ENCODE measurements at regions of chr2 and their contacts with region 1.

Region 1: GRCh38 chr2:233251306-233252116 is at the start of gene ATG16L1:
- DNase-seq: peak; percentile 89 to 98 (median 95)
- ATAC-seq: peak; percentile 94
- H3K4me3 ChIP-seq: peak within 1 kb of the TSS; percentile 85 to 92
- H3K4me3 Mint-ChIP-seq: peak within 1 kb of the TSS; percentile 90
- H3K27ac ChIP-seq: peak within 1 kb of the TSS; percentile 82 to 97
- H3K27ac Mint-ChIP-seq: peak within 1 kb of the TSS; percentile 96
- H3K4me1 ChIP-seq: peaks cover 59% of the 10 kb centered on the region
- H3K4me1 Mint-ChIP-seq: peaks cover 71% of the 10 kb centered on the region
- H3K27me3 ChIP-seq: no peaks in the 10 kb centered on the region
- H3K27me3 Mint-ChIP-seq: no peaks in the 10 kb centered on the region
- CTCF ChIP-seq: peak; percentile 93
- total RNA-seq, gene ATG16L1: 156 to 164 TPM

Region 2: DNA sequence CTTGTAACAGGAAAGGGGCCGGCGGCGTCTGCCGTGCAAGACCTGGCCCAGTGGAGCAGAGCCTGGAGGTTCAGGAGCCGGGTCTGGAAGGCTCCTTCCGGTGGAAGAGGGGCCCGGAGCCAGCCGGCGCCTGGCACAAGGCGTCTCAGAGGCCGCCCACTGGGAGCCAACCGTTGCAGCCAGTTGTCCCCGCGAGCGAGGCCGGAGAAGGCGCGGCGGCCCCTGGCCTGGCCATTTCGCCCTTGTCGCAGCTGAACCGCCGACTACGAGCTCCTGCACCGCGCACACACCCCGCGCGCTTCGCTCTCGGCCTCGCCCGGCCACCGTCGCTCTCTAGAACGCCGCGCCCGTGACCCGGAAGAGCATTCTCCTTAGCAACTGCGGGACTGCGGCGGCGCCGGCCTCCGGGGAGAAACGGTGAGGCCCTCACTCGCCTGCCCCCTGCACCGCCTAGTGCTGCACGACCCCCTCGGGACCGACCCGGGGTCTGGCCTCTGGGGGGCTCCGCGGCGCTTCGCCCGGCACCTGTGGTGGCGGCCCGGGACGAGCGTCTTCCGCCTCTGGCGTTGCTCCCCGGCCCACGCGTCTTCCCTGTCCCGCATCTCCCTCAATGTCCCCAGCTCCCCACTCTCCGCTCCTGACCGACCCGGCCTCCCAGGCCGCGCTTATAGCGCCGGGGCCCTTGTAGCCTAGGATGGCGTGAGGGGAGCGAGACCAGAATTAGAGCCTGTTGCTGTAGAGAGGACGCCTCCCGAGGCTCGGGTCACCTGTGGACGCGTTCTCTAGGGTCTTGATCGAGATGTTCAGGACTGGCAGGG is 1290.0 kb before region 1 on chr2 and contains the start of gene DIS3L2:
- CTCF ChIA-PET with region 1: no interaction called
- POLR2A ChIA-PET with region 1: no interaction called
- intact Hi-C with region 1: loop called in 1 of 2 experiments (anchors 5 kb)
- DNase-seq: peak; percentile 60 to 89 (median 78)
- ATAC-seq: peak; percentile 94
- H3K4me3 ChIP-seq: peak within 1 kb of the TSS; percentile 78 to 80
- H3K4me3 Mint-ChIP-seq: peak within 1 kb of the TSS; percentile 95
- H3K27ac ChIP-seq: peak within 1 kb of the TSS; percentile 57 to 68
- H3K27ac Mint-ChIP-seq: peak within 1 kb of the TSS; percentile 92
- H3K4me1 ChIP-seq: peaks cover 20% of the 10 kb centered on the region
- H3K4me1 Mint-ChIP-seq: peaks cover 43% of the 10 kb centered on the region
- H3K27me3 ChIP-seq: no peaks in the 10 kb centered on the region
- H3K27me3 Mint-ChIP-seq: no peaks in the 10 kb centered on the region
- CTCF ChIP-seq: no peak
- total RNA-seq, gene DIS3L2: 46.9 to 56.5 TPM

Region 3: DNA sequence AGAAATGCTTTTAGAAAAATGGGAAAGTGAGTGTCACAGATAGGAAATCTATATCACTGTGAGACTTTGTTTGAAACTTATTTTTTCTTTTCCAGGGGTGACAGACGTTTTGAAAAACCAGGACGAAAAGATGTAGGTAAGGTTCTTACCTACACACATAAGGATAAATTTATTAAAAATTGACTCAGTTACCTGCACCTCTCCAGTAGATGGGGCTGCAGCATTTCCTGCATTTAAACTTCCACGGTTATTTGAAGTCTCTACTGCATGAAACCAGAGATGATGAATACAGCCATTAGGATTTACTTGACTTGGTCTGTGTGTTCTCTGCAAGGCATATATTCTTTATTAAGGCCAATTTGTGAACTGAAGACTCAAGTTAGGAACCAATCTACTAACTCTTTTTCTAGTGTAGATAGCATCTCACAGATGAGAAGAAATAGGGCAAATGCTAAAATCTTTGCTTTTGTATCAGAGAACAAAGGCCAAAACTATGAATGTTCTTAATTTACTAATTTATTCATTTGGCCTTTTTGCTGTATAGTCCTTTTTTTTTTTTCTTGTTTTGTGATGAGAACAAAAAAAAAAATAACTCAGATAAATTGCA is 490.1 kb before region 1 on chr2:
- CTCF ChIA-PET with region 1: no interaction called
- POLR2A ChIA-PET with region 1: no interaction called
- intact Hi-C with region 1: loop called (anchors 2 kb)
- DNase-seq: peak in 7 of 9 experiments; percentile 2 to 63 (median 22)
- ATAC-seq: peak; percentile 69
- H3K4me3 ChIP-seq: no peak overlapping the region
- H3K4me3 Mint-ChIP-seq: no peak overlapping the region
- H3K27ac ChIP-seq: no peak overlapping the region
- H3K27ac Mint-ChIP-seq: no peak overlapping the region
- H3K4me1 ChIP-seq: no peaks in the 10 kb centered on the region
- H3K4me1 Mint-ChIP-seq: peaks cover 16% of the 10 kb centered on the region
- H3K27me3 ChIP-seq: no peaks in the 10 kb centered on the region
- H3K27me3 Mint-ChIP-seq: no peaks in the 10 kb centered on the region
- CTCF ChIP-seq: peak; percentile 50

Region 4: DNA sequence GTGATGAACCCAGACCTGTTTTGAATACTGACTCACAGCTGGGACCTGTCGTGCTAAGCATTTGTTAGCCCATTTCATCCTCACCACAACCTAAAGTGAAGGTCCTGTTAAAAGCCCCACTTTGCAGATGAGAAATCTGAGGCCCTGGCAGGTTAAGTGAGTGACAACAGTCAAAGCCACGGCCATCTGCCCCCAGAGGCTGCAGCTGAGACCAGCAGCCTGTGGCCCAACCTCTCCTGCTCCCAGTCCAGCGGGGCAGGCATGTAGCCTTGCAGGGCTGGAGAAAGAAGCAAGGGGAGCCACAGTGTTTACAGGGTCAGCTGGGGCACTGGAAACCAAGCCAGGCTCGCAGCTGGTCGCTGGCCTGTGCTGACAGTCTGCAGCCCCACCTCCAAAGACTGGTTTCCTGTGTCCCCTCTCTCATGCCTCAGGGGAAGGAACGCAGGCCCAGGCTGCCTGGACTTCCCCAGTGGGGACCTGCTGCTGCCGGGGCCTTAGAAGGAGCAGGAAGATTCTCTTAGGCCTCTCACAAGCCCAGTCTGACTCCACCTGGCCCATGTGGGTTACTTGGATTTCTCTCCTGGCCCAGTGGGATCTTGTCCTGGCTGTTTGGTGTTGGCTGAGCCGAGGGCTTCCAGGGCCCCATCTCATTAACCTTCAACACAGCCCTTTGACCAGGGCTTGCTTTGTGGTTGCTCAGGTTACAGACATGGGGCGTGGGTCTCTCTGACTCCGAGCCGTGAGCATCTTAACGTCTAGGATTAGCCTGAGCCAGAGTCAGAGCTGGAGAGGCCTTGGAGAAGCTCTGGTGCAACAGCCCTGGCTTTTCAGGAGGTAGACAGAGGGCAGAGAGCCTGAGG is 189.7 kb before region 1 on chr2:
- CTCF ChIA-PET with region 1: interaction called, 11 read pairs
- POLR2A ChIA-PET with region 1: interaction called, 14 read pairs
- intact Hi-C with region 1: loop called (anchors 2 kb)
- DNase-seq: peak in 4 of 9 experiments; percentile 35 to 61 (median 45)
- ATAC-seq: peak; percentile 9
- H3K4me3 ChIP-seq: peak overlapping the region; percentile 75 to 83
- H3K4me3 Mint-ChIP-seq: peak overlapping the region; percentile 95
- H3K27ac ChIP-seq: peak overlapping the region; percentile 64 to 95
- H3K27ac Mint-ChIP-seq: peak overlapping the region; percentile 94
- H3K4me1 ChIP-seq: peaks cover 44% of the 10 kb centered on the region
- H3K4me1 Mint-ChIP-seq: peaks cover 55% of the 10 kb centered on the region
- H3K27me3 ChIP-seq: no peaks in the 10 kb centered on the region
- H3K27me3 Mint-ChIP-seq: no peaks in the 10 kb centered on the region
- CTCF ChIP-seq: no peak

Region 5: GRCh38 chr2:233108611-233109490 is 142.7 kb before region 1 on chr2:
- CTCF ChIA-PET with region 1: no interaction called
- POLR2A ChIA-PET with region 1: no interaction called
- intact Hi-C with region 1: no loop called
- DNase-seq: peak in 1 of 9 experiments; percentile 28
- ATAC-seq: peak; percentile 26
- H3K4me3 ChIP-seq: no peak overlapping the region
- H3K4me3 Mint-ChIP-seq: no peak overlapping the region
- H3K27ac ChIP-seq: peak overlapping the region in 1 of 2 experiments; percentile 4
- H3K27ac Mint-ChIP-seq: peak overlapping the region; percentile 74
- H3K4me1 ChIP-seq: peaks cover 58% of the 10 kb centered on the region
- H3K4me1 Mint-ChIP-seq: peaks cover 78% of the 10 kb centered on the region
- H3K27me3 ChIP-seq: no peaks in the 10 kb centered on the region
- H3K27me3 Mint-ChIP-seq: no peaks in the 10 kb centered on the region
- CTCF ChIP-seq: no peak

Region 6: GRCh38 chr2:233185963-233186362 is 65.5 kb before region 1 on chr2:
- CTCF ChIA-PET with region 1: no interaction called
- POLR2A ChIA-PET with region 1: no interaction called
- intact Hi-C with region 1: loop called (anchors 5 kb)
- DNase-seq: no peak
- ATAC-seq: no peak
- H3K4me3 ChIP-seq: no peak overlapping the region
- H3K4me3 Mint-ChIP-seq: no peak overlapping the region
- H3K27ac ChIP-seq: no peak overlapping the region
- H3K27ac Mint-ChIP-seq: peak overlapping the region; percentile 53
- H3K4me1 ChIP-seq: no peaks in the 10 kb centered on the region
- H3K4me1 Mint-ChIP-seq: no peaks in the 10 kb centered on the region
- H3K27me3 ChIP-seq: no peaks in the 10 kb centered on the region
- H3K27me3 Mint-ChIP-seq: no peaks in the 10 kb centered on the region
- CTCF ChIP-seq: no peak

Region 7: GRCh38 chr2:233331536-233331935 is 80.0 kb after region 1 on chr2:
- CTCF ChIA-PET with region 1: interaction called, 5 read pairs
- POLR2A ChIA-PET with region 1: no interaction called
- intact Hi-C with region 1: loop called in 1 of 2 experiments (anchors 5 kb)
- DNase-seq: peak; percentile 61 to 96 (median 83)
- ATAC-seq: peak; percentile 92
- H3K4me3 ChIP-seq: peak overlapping the region; percentile 2 to 5
- H3K4me3 Mint-ChIP-seq: peak overlapping the region; percentile 29
- H3K27ac ChIP-seq: peak overlapping the region; percentile 66 to 89
- H3K27ac Mint-ChIP-seq: peak overlapping the region; percentile 96
- H3K4me1 ChIP-seq: peaks cover 53% of the 10 kb centered on the region
- H3K4me1 Mint-ChIP-seq: peaks cover 48% of the 10 kb centered on the region
- H3K27me3 ChIP-seq: no peaks in the 10 kb centered on the region
- H3K27me3 Mint-ChIP-seq: no peaks in the 10 kb centered on the region
- CTCF ChIP-seq: no peak

Measured in CD8-positive, alpha-beta T cell (primary cell).